GM10248 (cell line): ENCODE measurements at regions of chr7 and their contacts with region 1.

Region 1: DNA sequence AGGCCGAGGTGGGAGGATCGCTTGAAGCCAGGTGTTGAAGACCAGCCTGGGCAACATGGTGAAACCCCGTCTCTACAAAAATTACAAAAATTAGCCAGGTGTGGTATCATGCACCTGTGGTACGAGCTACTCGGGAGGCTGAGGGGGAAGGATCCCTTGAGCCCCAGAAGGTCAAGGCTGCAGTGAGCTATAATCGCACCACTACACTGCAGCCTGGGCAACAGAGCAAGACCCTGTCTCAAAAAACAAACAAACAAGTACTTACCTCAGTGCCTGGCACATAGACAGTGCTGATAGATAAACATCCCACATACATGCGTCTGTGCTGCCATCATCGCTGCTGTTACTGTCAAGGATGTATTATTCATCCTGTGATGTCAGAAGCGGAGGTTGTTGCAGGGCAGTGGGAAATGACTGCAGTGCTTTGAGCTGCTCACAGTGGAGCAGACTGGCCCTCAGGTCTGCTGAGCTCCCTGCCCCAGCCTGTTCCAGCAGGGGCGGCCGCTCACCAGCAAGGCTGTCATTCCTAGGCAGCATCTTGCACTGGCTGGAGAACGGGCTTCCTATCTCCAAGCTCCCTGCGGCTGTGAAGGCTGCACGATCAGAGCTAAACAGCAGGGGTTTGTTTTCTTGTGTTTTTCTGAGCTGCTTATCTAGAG is 18.6 kb downstream of the FOXK1 start:
- DNase-seq: no peak
- CTCF ChIP-seq: no peak

Region 2: GRCh38 chr7:4712281-4713182 is 11.8 kb after region 1 on chr7:
- CTCF ChIA-PET with region 1: interaction called, 15 read pairs
- POLR2A ChIA-PET with region 1: no interaction called
- DNase-seq: peak; percentile 62
- CTCF ChIP-seq: no peak